Calu3 (cell line): ENCODE measurements at regions of chr17 and their contacts with region 1.

Region 1: GRCh38 chr17:55527540-55528118 is 16.4 kb upstream of the SMIM36 start:
- DNase-seq: peak; percentile 41
- H3K4me3 Mint-ChIP-seq: no peak overlapping the region
- H3K27ac Mint-ChIP-seq: no peak overlapping the region
- H3K4me1 Mint-ChIP-seq: no peaks in the 10 kb centered on the region
- H3K27me3 Mint-ChIP-seq: no peaks in the 10 kb centered on the region
- CTCF ChIP-seq: no peak

Region 2: GRCh38 chr17:55437159-55437605 is 90.4 kb before region 1 on chr17:
- CTCF ChIA-PET with region 1: no interaction called
- intact Hi-C with region 1: no loop called
- DNase-seq: no peak
- H3K4me3 Mint-ChIP-seq: no peak overlapping the region
- H3K27ac Mint-ChIP-seq: no peak overlapping the region
- H3K4me1 Mint-ChIP-seq: peaks cover 45% of the 10 kb centered on the region
- H3K27me3 Mint-ChIP-seq: no peaks in the 10 kb centered on the region
- CTCF ChIP-seq: no peak

Region 3: GRCh38 chr17:55584050-55584685 is 56.5 kb after region 1 on chr17:
- CTCF ChIA-PET with region 1: no interaction called
- intact Hi-C with region 1: loop called (anchors 5 kb)
- DNase-seq: peak; percentile 5
- H3K4me3 Mint-ChIP-seq: no peak overlapping the region
- H3K27ac Mint-ChIP-seq: peak overlapping the region; percentile 73
- H3K4me1 Mint-ChIP-seq: peaks cover 64% of the 10 kb centered on the region
- H3K27me3 Mint-ChIP-seq: no peaks in the 10 kb centered on the region
- CTCF ChIP-seq: no peak

Region 4: GRCh38 chr17:55717898-55718735 is 190.5 kb after region 1 on chr17:
- CTCF ChIA-PET with region 1: interaction called, 3 read pairs
- intact Hi-C with region 1: loop called (anchors 1 kb)
- DNase-seq: peak; percentile 76
- H3K4me3 Mint-ChIP-seq: no peak overlapping the region
- H3K27ac Mint-ChIP-seq: no peak overlapping the region
- H3K4me1 Mint-ChIP-seq: peaks cover 9% of the 10 kb centered on the region
- H3K27me3 Mint-ChIP-seq: peaks cover 9% of the 10 kb centered on the region
- CTCF ChIP-seq: peak; percentile 39

Region 5: DNA sequence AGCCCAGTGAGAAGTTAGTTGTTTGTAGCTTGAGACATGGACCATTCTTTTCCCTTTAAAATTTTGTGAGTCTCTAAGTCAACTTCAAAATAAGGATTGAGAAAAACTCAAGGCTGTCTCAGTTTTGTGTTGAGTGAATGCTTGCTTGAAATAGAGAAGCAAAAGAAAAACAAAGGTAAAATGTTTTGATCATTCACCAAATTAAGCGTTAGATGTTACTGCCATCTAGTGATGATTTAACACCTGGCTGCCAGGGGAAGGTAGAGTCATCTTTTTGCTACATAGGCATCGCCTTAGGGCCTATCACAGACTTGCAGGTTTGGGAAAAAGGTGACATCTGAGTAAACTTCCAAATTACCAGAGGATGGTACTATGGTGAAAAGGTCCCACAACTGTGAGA is 297.6 kb after region 1 on chr17:
- CTCF ChIA-PET with region 1: no interaction called
- intact Hi-C with region 1: loop called (anchors 1 kb)
- DNase-seq: peak; percentile 13
- H3K4me3 Mint-ChIP-seq: no peak overlapping the region
- H3K27ac Mint-ChIP-seq: no peak overlapping the region
- H3K4me1 Mint-ChIP-seq: no peaks in the 10 kb centered on the region
- H3K27me3 Mint-ChIP-seq: peaks cover 18% of the 10 kb centered on the region
- CTCF ChIP-seq: no peak

Region 6: GRCh38 chr17:56478836-56479447 is 951.3 kb after region 1 on chr17:
- CTCF ChIA-PET with region 1: no interaction called
- intact Hi-C with region 1: loop called (anchors 10 kb)
- DNase-seq: no peak
- H3K4me3 Mint-ChIP-seq: no peak overlapping the region
- H3K27ac Mint-ChIP-seq: no peak overlapping the region
- H3K4me1 Mint-ChIP-seq: no peaks in the 10 kb centered on the region
- H3K27me3 Mint-ChIP-seq: peaks cover 23% of the 10 kb centered on the region
- CTCF ChIP-seq: no peak